PC-9 (cell line): ENCODE measurements at regions of chr2 and their contacts with region 1.

Region 1: DNA sequence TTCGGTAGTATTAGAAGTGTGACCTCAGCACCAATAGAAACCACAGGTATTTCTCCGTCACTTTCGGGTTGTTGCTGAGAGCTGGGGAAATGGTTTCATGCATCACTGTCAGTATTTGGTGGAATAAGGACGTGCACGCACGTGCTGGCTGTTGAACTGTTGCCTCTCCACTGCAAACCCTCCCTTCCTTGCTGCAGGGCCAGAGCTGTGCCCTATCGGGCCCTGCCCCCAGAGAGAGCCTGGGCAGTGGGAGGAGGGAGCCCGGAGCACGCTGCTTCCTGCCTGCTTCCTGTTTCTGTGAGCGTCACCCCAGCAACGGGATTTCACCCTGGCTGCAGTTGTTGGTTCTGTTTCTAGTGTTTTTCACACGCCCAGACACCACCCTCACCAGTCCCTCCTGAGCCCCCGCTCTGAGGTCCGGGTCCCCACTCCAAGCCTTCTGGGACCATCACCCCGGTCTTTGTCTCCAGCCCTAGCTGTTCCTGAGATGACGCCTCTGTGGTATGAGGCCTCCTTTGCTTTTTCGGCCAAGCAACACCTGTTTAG is 47.4 kb downstream of the LRRFIP1 start:
- DNase-seq: peak in 1 of 2 experiments; percentile 88
- H3K4me3 ChIP-seq: no peak overlapping the region
- H3K27ac ChIP-seq: no peak overlapping the region
- H3K4me1 ChIP-seq: peaks cover 27% of the 10 kb centered on the region
- H3K27me3 ChIP-seq: no peaks in the 10 kb centered on the region
- CTCF ChIP-seq: no peak

Region 2: GRCh38 chr2:237486819-237487444 is 187.9 kb before region 1 on chr2 and contains the start of gene MLPH:
- CTCF ChIA-PET with region 1: no interaction called
- POLR2A ChIA-PET with region 1: no interaction called
- intact Hi-C with region 1: no loop called
- DNase-seq: peak; percentile 75 to 89
- H3K4me3 ChIP-seq: peak within 1 kb of the TSS; percentile 70
- H3K27ac ChIP-seq: peak within 1 kb of the TSS; percentile 99
- H3K4me1 ChIP-seq: peaks cover 76% of the 10 kb centered on the region
- H3K27me3 ChIP-seq: no peaks in the 10 kb centered on the region
- CTCF ChIP-seq: no peak
- total RNA-seq, gene MLPH: 237 and 283 TPM in 2 replicates

Region 3: GRCh38 chr2:237590272-237591140 is 84.3 kb before region 1 on chr2 and contains the start of gene RAB17:
- CTCF ChIA-PET with region 1: no interaction called
- POLR2A ChIA-PET with region 1: no interaction called
- intact Hi-C with region 1: loop called (anchors 1 kb)
- DNase-seq: peak; percentile 91 to 94
- H3K4me3 ChIP-seq: peak within 1 kb of the TSS; percentile 64
- H3K27ac ChIP-seq: peak within 1 kb of the TSS; percentile 85
- H3K4me1 ChIP-seq: peaks cover 28% of the 10 kb centered on the region
- H3K27me3 ChIP-seq: no peaks in the 10 kb centered on the region
- CTCF ChIP-seq: no peak
- total RNA-seq, gene RAB17: 86.3 and 88.1 TPM in 2 replicates

Region 4: GRCh38 chr2:237650455-237650850 is 24.4 kb before region 1 on chr2:
- CTCF ChIA-PET with region 1: no interaction called
- POLR2A ChIA-PET with region 1: no interaction called
- intact Hi-C with region 1: loop called (anchors 2 kb)
- DNase-seq: peak; percentile 96 to 97
- H3K4me3 ChIP-seq: no peak overlapping the region
- H3K27ac ChIP-seq: no peak overlapping the region
- H3K4me1 ChIP-seq: peaks cover 19% of the 10 kb centered on the region
- H3K27me3 ChIP-seq: no peaks in the 10 kb centered on the region
- CTCF ChIP-seq: no peak

Region 5: DNA sequence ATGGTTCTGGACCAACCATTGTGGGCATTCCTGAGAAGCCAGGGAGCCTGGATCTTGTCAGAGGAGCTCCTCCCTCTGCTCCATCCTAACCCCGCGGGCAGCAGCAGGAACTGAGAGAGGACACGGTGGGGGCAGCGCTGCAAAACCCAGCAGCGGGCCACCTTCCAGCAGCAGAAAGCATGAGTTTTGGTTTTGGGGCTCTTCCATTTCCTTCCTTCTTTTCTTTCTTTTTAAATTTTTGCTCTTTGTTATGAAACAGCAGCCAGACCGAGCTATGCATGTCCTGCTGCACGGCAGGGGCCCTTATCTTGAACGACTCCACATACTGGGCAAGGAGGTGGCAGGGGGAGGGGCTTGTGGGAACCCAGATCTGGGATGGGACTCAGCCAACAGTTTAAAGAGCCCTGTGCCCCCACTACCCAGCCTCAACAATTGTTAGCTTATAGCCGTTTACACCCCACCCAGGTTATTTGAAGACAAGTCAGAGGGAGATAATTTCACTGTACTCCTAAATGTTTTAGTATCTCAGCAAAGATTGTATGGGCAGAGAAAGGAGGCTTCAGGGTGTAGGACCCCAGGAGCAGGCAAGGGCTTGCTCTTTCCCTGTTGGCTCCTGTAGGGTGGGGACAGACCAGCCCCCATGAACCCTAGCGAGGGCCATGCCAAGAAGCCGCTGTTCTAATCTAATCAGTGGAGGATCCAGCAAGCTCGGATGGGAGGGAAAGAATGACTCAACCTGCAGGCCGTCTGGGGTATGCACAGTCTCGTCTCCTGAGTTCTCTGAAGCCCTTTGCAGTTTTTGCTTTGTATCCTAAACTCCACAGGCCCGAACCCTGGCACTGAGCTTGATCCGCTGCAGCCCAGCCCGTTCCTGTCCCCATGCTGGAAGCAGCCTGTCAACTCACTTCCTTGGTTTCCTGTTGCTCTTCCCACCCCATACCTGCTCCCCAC is 27.9 kb after region 1 on chr2:
- CTCF ChIA-PET with region 1: interaction called, 3 read pairs
- POLR2A ChIA-PET with region 1: interaction called, 11 read pairs
- intact Hi-C with region 1: loop called (anchors 1 kb)
- DNase-seq: peak in 1 of 2 experiments; percentile 54
- H3K4me3 ChIP-seq: no peak overlapping the region
- H3K27ac ChIP-seq: no peak overlapping the region
- H3K4me1 ChIP-seq: peaks cover 5% of the 10 kb centered on the region
- H3K27me3 ChIP-seq: no peaks in the 10 kb centered on the region
- CTCF ChIP-seq: no peak

Region 6: GRCh38 chr2:237774802-237775553 is 100.2 kb after region 1 on chr2:
- CTCF ChIA-PET with region 1: no interaction called
- POLR2A ChIA-PET with region 1: no interaction called
- intact Hi-C with region 1: loop called (anchors 1 kb)
- DNase-seq: peak; percentile 59 to 63
- H3K4me3 ChIP-seq: no peak overlapping the region
- H3K27ac ChIP-seq: no peak overlapping the region
- H3K4me1 ChIP-seq: no peaks in the 10 kb centered on the region
- H3K27me3 ChIP-seq: no peaks in the 10 kb centered on the region
- CTCF ChIP-seq: peak; percentile 89

Region 7: DNA sequence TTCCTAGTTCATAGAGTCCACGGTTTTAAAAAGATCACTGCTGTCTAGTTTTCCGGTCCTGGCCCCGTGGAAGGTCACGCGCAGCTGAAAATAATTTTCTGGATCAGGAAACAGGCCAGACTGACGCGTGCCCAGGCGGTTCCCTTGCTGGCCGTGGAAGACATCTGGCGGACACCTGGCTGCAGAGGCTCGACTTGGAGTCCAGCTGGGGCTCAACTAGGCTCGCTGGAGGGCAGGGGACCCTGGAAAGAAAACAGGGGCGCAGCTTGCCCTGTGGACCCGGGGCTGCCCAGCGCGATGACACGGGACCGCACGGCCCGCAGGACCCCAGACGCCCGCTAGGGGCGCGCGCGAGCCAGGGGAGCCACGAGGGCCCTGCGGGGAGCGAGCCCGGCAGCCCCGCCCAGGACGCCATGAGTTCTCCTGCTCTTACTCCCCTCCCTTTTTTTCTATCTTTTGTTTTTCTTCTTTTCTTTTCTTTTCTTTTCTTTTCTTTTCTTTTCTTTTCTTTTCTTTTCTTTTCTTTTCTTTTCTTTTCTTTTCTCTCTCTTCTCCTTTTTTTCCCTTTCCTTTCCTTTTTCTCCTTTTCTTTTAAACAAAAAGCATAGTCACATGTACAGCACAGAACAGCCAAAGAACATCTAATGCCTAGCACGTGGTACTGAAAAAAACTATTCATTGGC is 248.8 kb after region 1 on chr2:
- CTCF ChIA-PET with region 1: interaction called, 10 read pairs
- POLR2A ChIA-PET with region 1: no interaction called
- intact Hi-C with region 1: no loop called
- DNase-seq: no peak
- H3K4me3 ChIP-seq: no peak overlapping the region
- H3K27ac ChIP-seq: no peak overlapping the region
- H3K4me1 ChIP-seq: peaks cover 23% of the 10 kb centered on the region
- H3K27me3 ChIP-seq: no peaks in the 10 kb centered on the region
- CTCF ChIP-seq: no peak

Region 8: DNA sequence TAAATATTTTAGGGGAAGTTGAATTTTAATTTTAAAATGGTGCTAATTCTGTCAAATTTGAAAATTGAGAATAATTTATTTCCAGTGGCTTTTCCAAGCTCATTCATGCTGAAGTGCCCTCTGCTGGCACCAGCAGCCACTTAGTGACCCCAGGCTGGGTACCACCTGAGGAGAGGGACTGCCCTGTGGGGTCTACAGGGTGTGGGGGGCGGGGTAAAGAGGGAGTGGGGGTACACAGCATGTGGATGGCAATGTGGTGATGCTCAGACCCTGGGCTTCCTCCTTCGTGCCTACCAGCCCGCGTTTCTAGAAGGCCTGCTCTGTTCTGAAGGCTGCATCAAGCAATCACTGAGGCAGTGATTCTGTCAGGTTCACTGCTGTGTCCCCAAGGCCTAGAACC is 340.9 kb after region 1 on chr2:
- CTCF ChIA-PET with region 1: interaction called, 35 read pairs
- POLR2A ChIA-PET with region 1: no interaction called
- intact Hi-C with region 1: no loop called
- DNase-seq: no peak
- H3K4me3 ChIP-seq: no peak overlapping the region
- H3K27ac ChIP-seq: no peak overlapping the region
- H3K4me1 ChIP-seq: no peaks in the 10 kb centered on the region
- H3K27me3 ChIP-seq: no peaks in the 10 kb centered on the region
- CTCF ChIP-seq: peak; percentile 52